A549 (cell line): ENCODE measurements at regions of chr16 and their contacts with region 1.

Region 1: DNA sequence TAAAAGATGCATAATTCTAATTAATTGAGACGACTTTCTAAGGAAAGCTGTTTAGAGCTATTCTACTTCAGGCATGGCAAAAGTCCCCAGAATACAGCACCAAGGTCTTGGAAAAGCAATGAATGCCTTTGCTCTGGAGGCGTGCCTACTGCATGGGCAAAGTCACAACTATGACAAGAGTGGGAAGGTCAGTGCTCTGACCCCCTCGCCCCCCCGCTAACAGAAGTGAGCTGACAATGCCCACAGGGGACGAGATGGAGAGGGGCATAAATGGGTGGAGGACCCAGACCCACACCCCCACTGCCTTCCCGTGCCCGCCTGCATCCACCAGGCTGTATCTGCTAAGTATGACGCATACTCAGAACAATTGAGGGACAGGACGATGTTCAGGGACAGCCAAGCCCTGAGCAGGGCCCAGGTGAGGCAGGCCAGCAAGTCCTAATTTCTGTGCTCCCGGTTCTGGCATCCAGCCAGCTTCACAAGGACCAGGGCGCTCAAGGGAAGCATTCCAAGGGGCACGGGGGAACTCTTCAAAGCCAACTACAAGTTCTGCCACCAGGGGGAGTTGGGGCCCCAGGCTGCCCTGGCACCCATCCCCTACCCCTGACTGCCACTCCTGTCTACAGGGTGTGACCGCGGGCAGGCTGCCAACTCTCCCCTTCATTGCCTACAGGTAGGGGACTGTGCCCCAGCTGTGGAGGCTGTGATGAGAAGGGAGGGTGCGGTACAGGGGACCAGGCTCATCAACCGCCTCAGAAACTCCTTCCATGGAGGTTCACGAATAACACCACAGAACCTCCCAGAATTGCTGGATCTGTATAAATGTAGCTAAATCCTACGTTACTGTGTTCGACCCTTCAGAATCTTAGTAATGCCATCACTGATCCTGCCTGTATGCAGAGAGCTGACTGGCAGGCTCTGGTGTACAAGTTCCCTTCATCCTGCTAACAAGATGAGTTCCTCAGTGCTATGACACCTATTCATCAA is 20.8 kb downstream of the NPRL3 start:
- DNase-seq: peak; percentile 70 to 74
- ATAC-seq: peak; percentile 81 to 92; a peak in 5 of 6 replicates
- H3K4me3 ChIP-seq: no peak overlapping the region
- H3K27ac ChIP-seq: peak overlapping the region in 1 of 2 experiments; percentile 13; a peak in 1 of 6 replicates
- H3K4me1 ChIP-seq: peaks cover 29% of the 10 kb centered on the region
- CTCF ChIP-seq: peak; percentile 65
- EP300 ChIP-seq: no peak
- POLR2A ChIP-seq: no peak
- RAD21 ChIP-seq: peak; percentile 57 to 58

Region 2: DNA sequence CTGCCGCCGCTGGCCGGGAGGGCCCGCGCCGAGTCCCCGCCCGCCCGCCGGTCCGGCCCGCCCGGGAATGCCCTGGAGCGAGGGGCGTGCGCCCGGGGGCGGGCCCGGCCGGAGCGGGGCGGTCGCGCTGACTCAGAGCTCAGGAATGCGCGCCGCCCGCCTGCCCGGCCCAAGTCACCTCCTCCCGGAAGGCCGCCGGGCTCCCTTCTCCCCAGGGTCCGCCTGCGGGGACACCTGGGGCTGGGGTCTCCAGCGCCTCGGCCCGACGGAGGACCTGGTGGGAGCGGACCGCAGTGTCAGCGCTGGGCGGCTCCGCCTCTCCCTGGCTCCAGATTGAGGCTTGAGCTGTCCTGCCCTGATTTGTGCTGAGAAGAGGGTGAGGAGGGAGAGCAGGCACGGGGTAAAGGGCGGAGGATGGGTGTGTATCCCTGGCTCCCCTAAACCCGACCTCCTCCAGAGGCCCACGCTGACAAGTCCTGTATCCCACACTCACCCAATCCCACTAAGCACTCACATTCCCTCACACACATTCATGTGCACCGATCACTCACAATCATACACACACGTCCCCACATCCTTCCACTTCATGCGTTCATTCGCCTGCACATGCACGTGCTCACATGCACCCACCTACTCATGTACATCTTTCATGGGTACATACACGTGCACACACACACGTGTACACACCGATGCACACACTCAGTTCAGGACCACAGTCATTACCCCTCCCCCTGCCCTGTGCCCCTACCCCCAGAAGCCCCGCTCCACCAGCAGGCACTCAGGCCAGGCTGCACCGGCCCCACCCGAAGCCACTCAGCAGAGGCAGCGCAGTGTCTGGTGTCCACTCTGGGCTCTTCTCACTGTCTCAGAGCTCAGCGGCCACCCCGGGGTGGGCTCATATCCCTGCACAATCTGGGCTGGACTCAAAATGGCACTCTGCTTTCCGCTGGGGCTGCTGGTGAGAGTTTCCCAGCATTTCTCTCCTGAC is 44.8 kb before region 1 on chr16 and contains the start of gene RHBDF1:
- CTCF ChIA-PET with region 1: interaction called, 12 read pairs
- POLR2A ChIA-PET with region 1: no interaction called
- DNase-seq: peak; percentile 47 to 53
- ATAC-seq: peak; percentile 34 to 49
- H3K4me3 ChIP-seq: peak within 1 kb of the TSS; percentile 86
- H3K27ac ChIP-seq: peak within 1 kb of the TSS; percentile 79 to 92
- H3K4me1 ChIP-seq: peaks cover 35% of the 10 kb centered on the region
- CTCF ChIP-seq: no peak
- EP300 ChIP-seq: no peak
- POLR2A ChIP-seq: 0 out of 2 replicates have a peak, but pooled peaks have one; percentile 12
- RAD21 ChIP-seq: no peak
- polyA plus RNA-seq, gene RHBDF1: 13.5 and 17.9 TPM in 2 replicates

Region 3: GRCh38 chr16:129075-129474 is 11.4 kb after region 1 on chr16:
- CTCF ChIA-PET with region 1: interaction called, 23 read pairs
- POLR2A ChIA-PET with region 1: no interaction called
- DNase-seq: no peak
- ATAC-seq: no peak
- H3K4me3 ChIP-seq: no peak overlapping the region
- H3K27ac ChIP-seq: no peak overlapping the region
- H3K4me1 ChIP-seq: no peaks in the 10 kb centered on the region
- CTCF ChIP-seq: no peak
- EP300 ChIP-seq: no peak
- POLR2A ChIP-seq: no peak
- RAD21 ChIP-seq: no peak